ENCODE measurements at regions of chr15 and their contacts with region 1.

Region 1: GRCh38 chr15:40857601-40858341 is 13.9 kb downstream of the SPINT1 start:
- DNase-seq: peak; percentile 82
- ATAC-seq: peak; percentile 90

Region 2: GRCh38 chr15:40893733-40894688 is 36.2 kb after region 1 on chr15 and contains the start of gene VPS18:
- intact Hi-C with region 1: loop called (anchors 5 kb)
- DNase-seq: peak; percentile 99
- ATAC-seq: peak; percentile 98
- total RNA-seq, gene VPS18: 18.4 TPM

Region 3: GRCh38 chr15:41180206-41180789 is 322.5 kb after region 1 on chr15:
- intact Hi-C with region 1: loop called (anchors 10 kb)
- DNase-seq: no peak
- ATAC-seq: no peak

Measured in Right ventricle myocardium superior (tissue), 1 donor.